ENCODE measurements at regions of chr2 and their contacts with region 1.

Region 1: DNA sequence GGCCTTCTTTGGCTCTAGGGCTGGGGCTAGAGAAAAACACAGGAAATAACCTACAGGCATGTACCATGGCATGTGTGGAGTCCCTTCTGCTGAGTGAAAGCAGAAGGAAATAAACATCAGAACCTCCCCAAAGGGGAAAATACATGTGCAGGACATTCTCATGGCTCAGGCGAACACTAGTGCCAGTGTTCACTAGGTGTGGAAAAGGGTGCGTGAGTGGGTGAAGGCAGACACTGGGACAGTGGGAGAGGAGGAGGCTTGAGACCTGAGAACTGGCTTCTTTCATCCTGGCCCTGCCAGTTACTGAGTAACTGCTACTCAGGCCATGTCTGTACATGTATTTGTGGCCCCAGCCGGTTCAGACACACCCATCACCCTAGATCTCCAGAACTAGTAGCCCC is 268.2 kb downstream of the PRKCE start:
- DNase-seq: no peak
- ATAC-seq: no peak
- H3K4me3 ChIP-seq: no peak overlapping the region
- H3K4me3 Mint-ChIP-seq: no peak overlapping the region
- H3K27ac ChIP-seq: no peak overlapping the region
- H3K27ac Mint-ChIP-seq: no peak overlapping the region
- H3K4me1 ChIP-seq: no peaks in the 10 kb centered on the region
- H3K4me1 Mint-ChIP-seq: no peaks in the 10 kb centered on the region
- H3K27me3 ChIP-seq: no peaks in the 10 kb centered on the region
- H3K27me3 Mint-ChIP-seq: no peaks in the 10 kb centered on the region
- CTCF ChIP-seq: no peak

Region 2: GRCh38 chr2:45177870-45178269 is 741.8 kb before region 1 on chr2:
- CTCF ChIA-PET with region 1: no interaction called
- POLR2A ChIA-PET with region 1: no interaction called
- intact Hi-C with region 1: no loop called
- DNase-seq: no peak
- ATAC-seq: no peak
- H3K4me3 ChIP-seq: no peak overlapping the region
- H3K4me3 Mint-ChIP-seq: no peak overlapping the region
- H3K27ac ChIP-seq: no peak overlapping the region
- H3K27ac Mint-ChIP-seq: no peak overlapping the region
- H3K4me1 ChIP-seq: no peaks in the 10 kb centered on the region
- H3K4me1 Mint-ChIP-seq: no peaks in the 10 kb centered on the region
- H3K27me3 ChIP-seq: peaks cover 5 to 8% of the 10 kb centered on the region in 2 experiments
- H3K27me3 Mint-ChIP-seq: peaks cover 53% of the 10 kb centered on the region
- CTCF ChIP-seq: no peak

Region 3: GRCh38 chr2:45851613-45852304 is 68.0 kb before region 1 on chr2:
- CTCF ChIA-PET with region 1: no interaction called
- POLR2A ChIA-PET with region 1: no interaction called
- intact Hi-C with region 1: no loop called
- DNase-seq: no peak
- ATAC-seq: no peak
- H3K4me3 ChIP-seq: no peak overlapping the region
- H3K4me3 Mint-ChIP-seq: no peak overlapping the region
- H3K27ac ChIP-seq: no peak overlapping the region
- H3K27ac Mint-ChIP-seq: no peak overlapping the region
- H3K4me1 ChIP-seq: no peaks in the 10 kb centered on the region
- H3K4me1 Mint-ChIP-seq: peaks cover 5% of the 10 kb centered on the region
- H3K27me3 ChIP-seq: no peaks in the 10 kb centered on the region
- H3K27me3 Mint-ChIP-seq: no peaks in the 10 kb centered on the region
- CTCF ChIP-seq: no peak

Region 4: DNA sequence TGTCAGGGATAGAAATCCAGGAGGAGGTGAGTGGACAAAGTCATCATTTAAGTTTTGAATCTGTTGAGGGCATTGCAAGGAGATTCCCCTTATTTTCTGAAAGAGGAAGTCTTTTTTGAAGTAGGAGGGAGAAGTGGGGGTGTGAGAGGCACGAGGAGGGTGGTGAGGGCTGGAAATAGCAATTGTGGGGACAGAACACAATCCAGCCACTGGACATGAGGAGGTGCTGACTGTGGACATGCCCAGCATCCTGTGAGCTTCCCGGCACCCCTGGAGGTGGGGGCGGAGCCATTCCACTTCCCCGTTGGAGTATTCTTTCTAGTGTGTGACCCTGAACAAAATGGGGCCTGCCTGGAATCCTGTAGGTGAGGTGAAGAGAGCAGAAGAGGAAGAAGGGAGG is 66.8 kb after region 1 on chr2:
- CTCF ChIA-PET with region 1: no interaction called
- POLR2A ChIA-PET with region 1: no interaction called
- intact Hi-C with region 1: loop called in 1 of 2 experiments (anchors 2 kb)
- DNase-seq: no peak
- ATAC-seq: no peak
- H3K4me3 ChIP-seq: no peak overlapping the region
- H3K4me3 Mint-ChIP-seq: no peak overlapping the region
- H3K27ac ChIP-seq: no peak overlapping the region
- H3K27ac Mint-ChIP-seq: no peak overlapping the region
- H3K4me1 ChIP-seq: no peaks in the 10 kb centered on the region
- H3K4me1 Mint-ChIP-seq: no peaks in the 10 kb centered on the region
- H3K27me3 ChIP-seq: no peaks in the 10 kb centered on the region
- H3K27me3 Mint-ChIP-seq: no peaks in the 10 kb centered on the region
- CTCF ChIP-seq: no peak